Naive thymus-derived CD4-positive, alpha-beta T cell (primary cell): ENCODE measurements at regions of chr17 and their contacts with region 1.

Region 1: GRCh38 chr17:1724506-1725362 is at the start of gene WDR81:
- DNase-seq: peak; percentile 72 to 89 (median 80)
- ATAC-seq: peak; percentile 84
- H3K4me3 ChIP-seq: peak within 1 kb of the TSS; percentile 70
- H3K4me3 Mint-ChIP-seq: peak within 1 kb of the TSS; percentile 75 to 87 (median 82)
- H3K27ac ChIP-seq: peak within 1 kb of the TSS; percentile 79
- H3K27ac Mint-ChIP-seq: peak within 1 kb of the TSS; percentile 70 to 90 (median 85)
- H3K4me1 ChIP-seq: peaks cover 25 to 33% of the 10 kb centered on the region in 2 donors
- H3K4me1 Mint-ChIP-seq: peaks cover 21 to 55% (median 40%) of the 10 kb centered on the region in 7 donors
- H3K27me3 ChIP-seq: no peaks in the 10 kb centered on the region
- H3K27me3 Mint-ChIP-seq: no peaks in the 10 kb centered on the region
- total RNA-seq, gene WDR81: 30.7 to 55.1 (median 38.3) TPM

Region 2: GRCh38 chr17:1590031-1590748 is 134.5 kb before region 1 on chr17:
- CTCF ChIA-PET with region 1: no interaction called
- POLR2A ChIA-PET with region 1: no interaction called
- intact Hi-C with region 1: no loop called
- DNase-seq: no peak
- ATAC-seq: peak; percentile 57
- H3K4me3 ChIP-seq: no peak overlapping the region
- H3K4me3 Mint-ChIP-seq: no peak overlapping the region
- H3K27ac ChIP-seq: no peak overlapping the region
- H3K27ac Mint-ChIP-seq: no peak overlapping the region
- H3K4me1 ChIP-seq: no peaks in the 10 kb centered on the region
- H3K4me1 Mint-ChIP-seq: peaks cover 0 to 4% (median 0%) of the 10 kb centered on the region in 7 donors
- H3K27me3 ChIP-seq: no peaks in the 10 kb centered on the region
- H3K27me3 Mint-ChIP-seq: peaks cover 0 to 2% (median 0%) of the 10 kb centered on the region in 5 donors

Region 3: GRCh38 chr17:1648963-1649843 is 75.5 kb before region 1 on chr17:
- CTCF ChIA-PET with region 1: interaction called, 3 read pairs
- POLR2A ChIA-PET with region 1: interaction called, 4 read pairs
- intact Hi-C with region 1: loop called in 1 of 2 experiments (anchors 2 kb)
- DNase-seq: peak; percentile 88 to 97 (median 93)
- ATAC-seq: peak; percentile 90
- H3K4me3 ChIP-seq: peak overlapping the region; percentile 64
- H3K4me3 Mint-ChIP-seq: peak overlapping the region; percentile 65 to 81 (median 74)
- H3K27ac ChIP-seq: peak overlapping the region; percentile 69
- H3K27ac Mint-ChIP-seq: peak overlapping the region in 5 of 9 donors; percentile 38 to 58 (median 55)
- H3K4me1 ChIP-seq: peaks cover 15 to 21% of the 10 kb centered on the region in 2 donors
- H3K4me1 Mint-ChIP-seq: peaks cover 0 to 38% (median 10%) of the 10 kb centered on the region in 7 donors
- H3K27me3 ChIP-seq: no peaks in the 10 kb centered on the region
- H3K27me3 Mint-ChIP-seq: no peaks in the 10 kb centered on the region

Region 4: DNA sequence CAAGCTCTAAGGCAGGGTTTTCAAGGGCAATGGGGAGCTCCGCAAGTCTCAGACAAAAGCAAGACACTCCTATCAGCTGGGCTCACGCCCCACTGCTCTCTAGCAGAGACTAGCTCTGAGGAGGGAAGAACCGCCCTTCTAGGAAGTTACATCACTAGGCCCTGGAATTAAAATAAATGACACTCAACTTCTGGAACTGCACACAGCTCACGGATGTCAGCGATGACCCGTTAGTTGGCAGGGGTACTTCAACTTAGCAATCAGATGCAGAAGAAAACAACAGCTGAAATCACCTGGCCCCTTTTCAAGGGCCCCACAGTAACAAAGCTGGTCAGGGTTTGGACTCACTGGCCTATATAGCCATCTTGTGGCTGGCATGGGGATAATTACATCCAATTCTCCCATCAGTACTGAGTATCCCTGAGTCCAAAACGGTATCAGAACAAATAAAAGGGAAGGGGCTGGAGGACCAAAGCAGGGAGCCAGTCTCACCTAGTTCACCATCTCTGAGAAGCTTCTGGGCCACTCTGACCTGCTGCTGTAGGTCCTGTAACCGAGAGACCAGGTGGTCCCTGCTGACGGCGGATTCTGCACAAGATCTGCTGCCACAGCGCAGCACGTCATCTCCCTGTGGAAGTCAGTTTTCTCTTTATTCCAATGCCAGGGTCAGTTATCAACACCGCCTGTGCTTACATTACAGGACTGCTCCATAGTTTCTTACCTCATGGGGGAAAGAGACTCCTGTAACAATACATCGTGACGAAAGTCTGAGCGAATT is 59.3 kb after region 1 on chr17:
- CTCF ChIA-PET with region 1: interaction called, 51 read pairs
- POLR2A ChIA-PET with region 1: interaction called, 6 read pairs
- intact Hi-C with region 1: loop called (anchors 1 to 2 kb)
- DNase-seq: peak in 3 of 9 donors; percentile 27 to 30 (median 28)
- ATAC-seq: peak; percentile 85
- H3K4me3 ChIP-seq: no peak overlapping the region
- H3K4me3 Mint-ChIP-seq: peak overlapping the region in 1 of 10 donors; percentile 59
- H3K27ac ChIP-seq: peak overlapping the region; percentile 14
- H3K27ac Mint-ChIP-seq: peak overlapping the region in 7 of 9 donors; percentile 28 to 82 (median 63)
- H3K4me1 ChIP-seq: no peaks in the 10 kb centered on the region
- H3K4me1 Mint-ChIP-seq: peaks cover 0 to 18% (median 14%) of the 10 kb centered on the region in 7 donors
- H3K27me3 ChIP-seq: no peaks in the 10 kb centered on the region
- H3K27me3 Mint-ChIP-seq: no peaks in the 10 kb centered on the region

Region 5: GRCh38 chr17:1829592-1830257 is 105.0 kb after region 1 on chr17 and contains the starts of genes RPA1 and SMYD4:
- CTCF ChIA-PET with region 1: interaction called, 7 read pairs
- POLR2A ChIA-PET with region 1: interaction called, 5 read pairs
- intact Hi-C with region 1: loop called in 1 of 2 experiments (anchors 2 kb)
- DNase-seq: peak; percentile 84 to 94 (median 89)
- ATAC-seq: peak; percentile 100
- H3K4me3 ChIP-seq: peak within 1 kb of the TSS; percentile 82
- H3K4me3 Mint-ChIP-seq: peak within 1 kb of the TSS; percentile 89 to 100 (median 98)
- H3K27ac ChIP-seq: peak within 1 kb of the TSS; percentile 86
- H3K27ac Mint-ChIP-seq: peak within 1 kb of the TSS; percentile 89 to 99 (median 95)
- H3K4me1 ChIP-seq: peaks cover 17 to 26% of the 10 kb centered on the region in 2 donors
- H3K4me1 Mint-ChIP-seq: peaks cover 39 to 80% (median 67%) of the 10 kb centered on the region in 7 donors
- H3K27me3 ChIP-seq: no peaks in the 10 kb centered on the region
- H3K27me3 Mint-ChIP-seq: no peaks in the 10 kb centered on the region
- total RNA-seq, gene RPA1: 57.8 to 264 (median 110) TPM
- total RNA-seq, gene SMYD4: 19.8 to 38.4 (median 32.5) TPM

Region 6: GRCh38 chr17:1870592-1870991 is 145.9 kb after region 1 on chr17:
- CTCF ChIA-PET with region 1: interaction called, 9 read pairs
- POLR2A ChIA-PET with region 1: interaction called, 3 read pairs
- intact Hi-C with region 1: loop called (anchors 1 kb)
- DNase-seq: peak in 7 of 9 donors; percentile 60 to 86 (median 79)
- ATAC-seq: peak; percentile 81
- H3K4me3 ChIP-seq: no peak overlapping the region
- H3K4me3 Mint-ChIP-seq: peak overlapping the region; percentile 16 to 93 (median 82)
- H3K27ac ChIP-seq: peak overlapping the region; percentile 88
- H3K27ac Mint-ChIP-seq: peak overlapping the region; percentile 90 to 99 (median 96)
- H3K4me1 ChIP-seq: peaks cover 34 to 40% of the 10 kb centered on the region in 2 donors
- H3K4me1 Mint-ChIP-seq: peaks cover 43 to 79% (median 71%) of the 10 kb centered on the region in 7 donors
- H3K27me3 ChIP-seq: no peaks in the 10 kb centered on the region
- H3K27me3 Mint-ChIP-seq: no peaks in the 10 kb centered on the region